ENCODE measurements at regions of chr3 and their contacts with region 1.

Region 1: DNA sequence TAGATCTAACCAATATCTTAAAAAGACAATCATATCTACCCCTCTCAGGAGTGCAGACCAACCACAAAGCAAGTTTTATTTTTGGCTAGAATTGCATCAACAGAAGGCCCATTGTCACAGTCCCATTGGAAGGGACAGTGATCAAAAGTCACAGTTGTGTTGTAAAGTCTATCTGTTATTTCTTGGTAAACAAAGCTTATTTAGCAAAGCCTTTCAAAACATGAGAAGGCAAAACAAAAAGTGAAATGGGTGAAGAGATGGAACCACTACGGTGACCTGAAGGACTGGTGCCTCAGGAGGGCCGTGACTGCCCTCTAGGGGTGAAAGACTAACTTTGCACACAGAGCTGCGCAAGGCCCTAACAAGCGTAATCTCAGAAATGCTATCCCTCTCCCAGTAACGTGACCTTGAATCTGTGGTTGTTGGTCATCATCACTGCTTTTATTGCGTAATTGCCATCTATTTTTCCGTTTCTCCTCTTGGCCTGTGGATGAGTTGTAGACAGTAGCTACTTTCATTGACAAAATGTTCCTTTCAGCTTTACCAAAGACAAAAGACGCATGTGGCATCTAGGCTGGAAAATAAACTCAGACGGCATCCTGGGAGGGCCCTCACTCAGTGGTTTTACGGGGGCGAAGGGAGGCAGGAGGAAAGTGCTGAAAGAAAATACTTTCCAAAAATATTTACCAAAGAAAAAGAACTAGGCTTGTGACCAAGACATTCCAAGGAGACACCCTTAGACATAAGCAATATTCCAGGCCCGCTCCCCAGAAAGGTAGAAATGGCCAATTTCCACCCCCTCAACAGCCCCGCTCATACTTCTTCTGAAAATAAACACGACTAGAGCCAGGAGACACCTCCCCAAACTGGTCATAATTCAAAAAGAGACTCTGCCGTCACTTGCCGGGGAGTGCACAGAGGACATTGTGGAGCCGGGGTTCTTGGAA is 79.4 kb downstream of the FRMD4B start:
- DNase-seq: peak; percentile 76

Region 2: GRCh38 chr3:69161587-69162307 is 144.8 kb before region 1 on chr3:
- CTCF ChIA-PET with region 1: interaction called, 39 read pairs
- POLR2A ChIA-PET with region 1: no interaction called
- DNase-seq: peak; percentile 61

Region 3: GRCh38 chr3:69342074-69342473 is 35.6 kb after region 1 on chr3:
- CTCF ChIA-PET with region 1: no interaction called
- POLR2A ChIA-PET with region 1: no interaction called
- DNase-seq: no peak